GM10248 (cell line): ENCODE measurements at regions of chr1 and their contacts with region 1.

Region 1: GRCh38 chr1:151790071-151790940 is at the start of gene TDRKH:
- DNase-seq: peak; percentile 99
- CTCF ChIP-seq: peak; percentile 46

Region 2: GRCh38 chr1:151741516-151741915 is 48.8 kb before region 1 on chr1:
- CTCF ChIA-PET with region 1: no interaction called
- POLR2A ChIA-PET with region 1: no interaction called
- DNase-seq: no peak
- CTCF ChIP-seq: no peak

Region 3: DNA sequence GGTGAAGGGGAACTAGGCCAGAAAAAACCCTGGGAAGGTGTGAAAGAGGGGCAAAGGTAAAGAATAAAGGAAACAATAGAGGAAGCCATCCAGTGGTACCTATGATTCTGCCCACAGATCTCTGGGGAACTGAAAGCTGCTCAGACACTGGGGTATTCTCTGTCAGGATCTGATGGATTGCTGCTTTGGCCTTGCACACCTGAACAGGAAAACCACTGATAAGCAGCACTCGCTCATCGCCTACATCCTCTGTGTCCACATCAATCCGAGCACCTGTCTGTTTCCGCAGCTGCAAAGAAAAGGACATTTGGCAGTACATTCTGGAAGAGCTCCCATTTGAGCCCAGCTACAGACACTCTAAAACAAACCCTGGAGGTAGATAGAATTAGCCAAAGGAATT is 10.5 kb before region 1 on chr1:
- CTCF ChIA-PET with region 1: interaction called, 12 read pairs
- POLR2A ChIA-PET with region 1: no interaction called
- DNase-seq: no peak
- CTCF ChIP-seq: no peak